ENCODE measurements at regions of chr20 and their contacts with region 1.

Region 1: GRCh38 chr20:48657475-48658470 is 170.0 kb downstream of the PREX1 start:
- DNase-seq: peak; percentile 64 to 74 (median 70)
- H3K4me3 ChIP-seq: no peak overlapping the region
- H3K4me3 Mint-ChIP-seq: peak overlapping the region in 2 of 8 donors; percentile 48 to 52
- H3K27ac ChIP-seq: no peak overlapping the region
- H3K27ac Mint-ChIP-seq: peak overlapping the region; percentile 22 to 87 (median 75)
- H3K4me1 ChIP-seq: no peaks in the 10 kb centered on the region
- H3K4me1 Mint-ChIP-seq: peaks cover 1 to 11% (median 7%) of the 10 kb centered on the region in 4 donors
- H3K27me3 ChIP-seq: no peaks in the 10 kb centered on the region
- H3K27me3 Mint-ChIP-seq: no peaks in the 10 kb centered on the region

Region 2: DNA sequence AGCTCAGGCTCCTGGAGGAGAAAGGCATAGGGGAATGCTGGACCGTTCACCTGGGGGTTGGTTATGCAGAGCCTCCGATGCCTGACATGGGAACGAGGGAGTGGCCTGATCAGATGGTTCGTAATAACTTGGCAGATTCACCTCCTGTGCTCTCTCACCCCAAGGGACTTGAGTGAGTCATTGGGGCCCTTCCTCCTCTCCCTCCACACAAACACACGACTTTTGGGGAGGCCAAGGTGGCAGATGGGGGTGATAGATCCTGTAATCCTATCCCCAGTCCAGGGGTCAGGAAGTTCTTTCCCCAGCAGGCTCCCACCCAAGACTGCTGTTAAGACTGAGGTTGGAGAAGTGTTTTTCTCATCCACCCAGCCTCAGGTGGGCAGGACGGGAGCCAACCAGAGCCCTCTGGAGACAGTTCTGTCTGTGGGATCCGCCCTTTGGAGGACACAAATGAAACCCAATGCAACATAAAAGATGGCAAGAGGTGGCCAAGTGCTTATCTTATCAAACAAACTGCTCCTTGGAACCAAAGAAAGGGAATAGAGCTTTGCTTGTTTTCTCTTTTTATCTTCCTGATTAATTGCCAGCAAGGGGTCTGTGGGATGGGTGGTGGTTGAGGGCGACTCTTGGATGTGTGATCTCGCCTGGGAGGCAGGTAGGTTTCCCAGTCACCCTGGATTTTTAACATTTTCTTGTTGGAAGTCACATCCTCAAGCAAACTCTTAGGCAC is 218.3 kb after region 1 on chr20:
- CTCF ChIA-PET with region 1: interaction called, 126 read pairs
- POLR2A ChIA-PET with region 1: interaction called, 4 read pairs
- intact Hi-C with region 1: no loop called
- DNase-seq: no peak
- H3K4me3 ChIP-seq: no peak overlapping the region
- H3K4me3 Mint-ChIP-seq: no peak overlapping the region
- H3K27ac ChIP-seq: no peak overlapping the region
- H3K27ac Mint-ChIP-seq: peak overlapping the region in 4 of 7 donors; percentile 18 to 59 (median 41)
- H3K4me1 ChIP-seq: peaks cover 7% of the 10 kb centered on the region
- H3K4me1 Mint-ChIP-seq: peaks cover 9 to 13% (median 9%) of the 10 kb centered on the region in 4 donors
- H3K27me3 ChIP-seq: no peaks in the 10 kb centered on the region
- H3K27me3 Mint-ChIP-seq: no peaks in the 10 kb centered on the region

Region 3: GRCh38 chr20:48897995-48898597 is 240.3 kb after region 1 on chr20:
- CTCF ChIA-PET with region 1: interaction called, 15 read pairs
- POLR2A ChIA-PET with region 1: no interaction called
- intact Hi-C with region 1: no loop called
- DNase-seq: no peak
- H3K4me3 ChIP-seq: no peak overlapping the region
- H3K4me3 Mint-ChIP-seq: no peak overlapping the region
- H3K27ac ChIP-seq: no peak overlapping the region
- H3K27ac Mint-ChIP-seq: no peak overlapping the region
- H3K4me1 ChIP-seq: no peaks in the 10 kb centered on the region
- H3K4me1 Mint-ChIP-seq: no peaks in the 10 kb centered on the region
- H3K27me3 ChIP-seq: no peaks in the 10 kb centered on the region
- H3K27me3 Mint-ChIP-seq: no peaks in the 10 kb centered on the region

Region 4: DNA sequence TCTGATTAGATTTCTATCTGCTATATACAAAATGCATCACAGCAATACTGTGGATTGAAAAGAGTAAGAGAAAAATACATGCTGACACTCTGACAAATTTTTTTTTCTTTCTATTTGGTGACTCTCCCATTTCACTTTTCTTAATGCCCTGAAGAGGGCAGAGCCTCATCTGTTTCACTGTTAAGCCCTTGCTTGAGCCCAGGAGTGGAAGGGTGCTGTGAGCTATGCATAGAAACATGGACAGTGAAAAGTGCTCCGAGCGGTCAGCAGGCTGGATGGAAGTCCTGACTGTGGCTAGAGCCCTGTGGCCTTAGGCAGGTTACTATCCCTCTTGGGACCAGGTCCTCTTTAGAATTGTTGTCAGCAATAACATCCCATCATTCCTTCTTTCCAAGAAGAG is 370.9 kb after region 1 on chr20:
- CTCF ChIA-PET with region 1: no interaction called
- POLR2A ChIA-PET with region 1: no interaction called
- intact Hi-C with region 1: no loop called
- DNase-seq: no peak
- H3K4me3 ChIP-seq: no peak overlapping the region
- H3K4me3 Mint-ChIP-seq: no peak overlapping the region
- H3K27ac ChIP-seq: no peak overlapping the region
- H3K27ac Mint-ChIP-seq: no peak overlapping the region
- H3K4me1 ChIP-seq: no peaks in the 10 kb centered on the region
- H3K4me1 Mint-ChIP-seq: no peaks in the 10 kb centered on the region
- H3K27me3 ChIP-seq: no peaks in the 10 kb centered on the region
- H3K27me3 Mint-ChIP-seq: no peaks in the 10 kb centered on the region